ENCODE measurements at regions of chr2 and their contacts with region 1.

Region 1: GRCh38 chr2:102436323-102436722 is 13.4 kb downstream of the IL18RAP start:
- DNase-seq: no peak
- H3K4me3 Mint-ChIP-seq: peak overlapping the region; percentile 9
- H3K27ac Mint-ChIP-seq: peak overlapping the region; percentile 63
- H3K4me1 Mint-ChIP-seq: peaks cover 32% of the 10 kb centered on the region
- H3K27me3 Mint-ChIP-seq: no peaks in the 10 kb centered on the region

Region 2: GRCh38 chr2:102138331-102138730 is 298.0 kb before region 1 on chr2:
- intact Hi-C with region 1: loop called (anchors 5 kb)
- DNase-seq: no peak
- H3K4me3 Mint-ChIP-seq: no peak overlapping the region
- H3K27ac Mint-ChIP-seq: peak overlapping the region; percentile 3
- H3K4me1 Mint-ChIP-seq: peaks cover 25% of the 10 kb centered on the region
- H3K27me3 Mint-ChIP-seq: peaks cover 39% of the 10 kb centered on the region

Region 3: DNA sequence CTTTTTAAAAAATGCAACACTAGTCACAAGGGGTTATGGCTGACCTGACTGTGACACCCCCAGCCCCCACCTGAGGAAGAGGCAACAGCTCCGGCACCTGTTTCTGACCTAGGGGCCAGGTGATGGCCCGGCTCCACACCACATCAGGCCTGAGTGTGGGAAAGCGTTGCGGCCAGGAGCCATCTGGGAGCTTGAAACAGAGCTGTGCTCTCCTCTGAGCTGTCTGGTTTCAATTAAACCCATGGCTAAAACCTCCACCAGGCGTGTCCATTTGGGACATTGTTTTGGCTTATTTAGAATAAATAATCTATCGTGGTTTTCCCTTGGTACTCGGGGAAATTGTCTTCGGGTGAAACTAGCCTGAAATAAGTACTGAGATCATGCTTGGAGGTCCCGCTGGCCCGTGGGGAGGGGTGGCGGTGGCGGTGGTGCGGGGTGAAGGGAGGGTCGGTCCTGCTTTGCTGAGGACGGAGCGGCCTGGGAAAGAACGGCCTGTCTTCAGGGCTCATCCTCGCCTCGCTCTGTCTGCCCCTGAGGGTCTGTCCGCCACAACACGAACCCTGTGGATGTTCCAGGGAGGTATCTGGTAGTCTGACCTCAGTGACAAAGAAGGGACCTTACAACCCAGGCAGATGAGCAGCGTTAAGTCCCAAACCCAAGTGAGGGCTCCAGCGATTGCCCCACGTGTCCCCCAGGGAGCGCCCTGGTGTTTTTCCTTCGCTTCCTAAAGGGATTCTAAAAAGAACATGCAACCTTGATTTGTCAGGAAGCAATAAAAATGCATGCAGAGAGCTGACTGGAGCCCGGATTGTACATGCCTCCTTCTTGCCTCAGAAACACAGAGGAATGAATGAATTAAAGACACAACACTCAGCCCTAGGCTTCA is 190.8 kb before region 1 on chr2:
- intact Hi-C with region 1: no loop called
- DNase-seq: no peak
- H3K4me3 Mint-ChIP-seq: no peak overlapping the region
- H3K27ac Mint-ChIP-seq: no peak overlapping the region
- H3K4me1 Mint-ChIP-seq: peaks cover 13% of the 10 kb centered on the region
- H3K27me3 Mint-ChIP-seq: peaks cover 1% of the 10 kb centered on the region

Region 4: DNA sequence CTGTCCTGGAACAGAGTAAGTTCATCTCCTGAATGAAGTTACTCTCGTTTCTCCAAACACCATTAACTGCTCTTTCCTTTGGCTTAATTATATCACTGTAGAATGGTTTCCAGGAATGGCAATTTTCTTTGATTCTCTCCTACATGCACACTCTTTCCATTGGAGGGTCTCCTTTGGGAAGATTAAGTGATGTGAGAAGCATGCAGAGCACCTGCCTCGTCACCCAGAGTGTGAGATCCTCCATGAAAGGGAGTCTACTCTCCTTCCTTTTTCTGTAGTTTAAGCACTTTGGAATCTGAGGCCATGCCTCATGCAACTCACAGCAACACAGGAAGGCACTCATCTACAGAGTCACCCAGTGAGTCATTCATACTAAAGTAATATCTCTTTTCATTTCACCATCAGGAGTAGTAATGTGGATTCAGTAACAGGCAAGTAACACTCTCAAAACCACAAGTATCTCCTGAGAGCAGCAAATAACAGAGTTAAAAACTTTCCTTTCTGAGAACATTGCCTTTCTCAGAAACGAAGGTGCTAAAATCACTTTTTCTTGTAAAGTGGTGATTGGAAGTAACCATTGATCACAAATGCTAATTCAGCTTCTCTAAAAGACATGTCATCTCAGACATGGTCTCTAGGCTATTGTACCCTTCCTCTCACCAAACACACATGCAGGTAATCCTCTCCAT is 177.8 kb before region 1 on chr2:
- intact Hi-C with region 1: loop called (anchors 2 kb)
- DNase-seq: peak; percentile 26
- H3K4me3 Mint-ChIP-seq: peak overlapping the region; percentile 40
- H3K27ac Mint-ChIP-seq: peak overlapping the region; percentile 98
- H3K4me1 Mint-ChIP-seq: peaks cover 47% of the 10 kb centered on the region
- H3K27me3 Mint-ChIP-seq: no peaks in the 10 kb centered on the region

Region 5: GRCh38 chr2:102355526-102356380 is 80.6 kb before region 1 on chr2 and contains the start of gene IL18R1:
- intact Hi-C with region 1: loop called (anchors 2 kb)
- DNase-seq: peak; percentile 68
- H3K4me3 Mint-ChIP-seq: peak within 1 kb of the TSS; percentile 98
- H3K27ac Mint-ChIP-seq: peak within 1 kb of the TSS; percentile 93
- H3K4me1 Mint-ChIP-seq: peaks cover 45% of the 10 kb centered on the region
- H3K27me3 Mint-ChIP-seq: no peaks in the 10 kb centered on the region
- total RNA-seq, gene IL18R1: 61.9 and 68.2 TPM in 2 replicates